Activated T-helper 1 cell treated with anti-CD3 and anti-CD28 coated beads, Interleukin-12 subunit alpha, Interleukin-12 subunit beta, Interleukin-2, Interleukin-4 antibody, amounts not matched to agents 30 ng/mL and 10 ng/mL and 1 ng/mL, durations not matched to agents 14 hours and 24 hours and 36 hours (primary cell): ENCODE measurements at regions of chr20 and their contacts with region 1.

Region 1: DNA sequence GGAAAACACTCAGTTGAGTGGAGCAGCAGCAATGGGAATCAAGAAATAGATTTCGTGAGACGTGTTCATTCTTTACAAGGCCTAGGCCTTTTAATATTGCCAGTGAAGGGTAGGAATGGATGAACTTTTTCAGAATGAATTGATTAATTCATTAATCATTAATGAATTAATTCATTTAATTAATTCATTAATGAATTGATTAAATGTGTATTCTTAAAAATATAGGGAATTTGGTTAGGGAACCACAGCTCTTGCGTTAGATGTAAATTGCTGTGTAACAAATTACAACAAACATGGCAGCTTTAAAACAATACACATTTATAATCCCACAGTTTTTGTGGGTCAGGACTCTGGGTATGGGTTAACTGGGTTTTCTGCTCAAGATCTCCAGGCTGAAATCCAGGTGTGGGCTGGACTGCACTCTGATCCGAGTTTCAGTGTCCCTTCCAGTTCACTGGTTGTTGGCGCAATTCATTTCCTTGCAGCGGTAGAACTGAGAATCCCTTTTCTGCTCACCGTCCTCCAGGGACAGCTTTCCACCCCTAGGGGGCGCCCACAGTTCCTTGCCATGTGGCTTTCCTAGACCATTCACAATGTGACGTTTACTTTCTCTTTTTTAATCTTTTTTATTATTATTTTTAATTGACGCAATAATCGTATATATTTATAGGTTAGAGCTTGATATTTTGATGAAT is 32.8 kb upstream of the BCAS1 start:
- DNase-seq: peak; percentile 61
- H3K4me3 Mint-ChIP-seq: no peak overlapping the region
- H3K27ac Mint-ChIP-seq: no peak overlapping the region
- H3K4me1 Mint-ChIP-seq: no peaks in the 10 kb centered on the region
- H3K27me3 Mint-ChIP-seq: peaks cover 17% of the 10 kb centered on the region

Region 2: GRCh38 chr20:54115151-54115854 is 12.1 kb after region 1 on chr20:
- intact Hi-C with region 1: no loop called
- DNase-seq: no peak
- H3K4me3 Mint-ChIP-seq: no peak overlapping the region
- H3K27ac Mint-ChIP-seq: no peak overlapping the region
- H3K4me1 Mint-ChIP-seq: no peaks in the 10 kb centered on the region
- H3K27me3 Mint-ChIP-seq: peaks cover 16% of the 10 kb centered on the region

Region 3: DNA sequence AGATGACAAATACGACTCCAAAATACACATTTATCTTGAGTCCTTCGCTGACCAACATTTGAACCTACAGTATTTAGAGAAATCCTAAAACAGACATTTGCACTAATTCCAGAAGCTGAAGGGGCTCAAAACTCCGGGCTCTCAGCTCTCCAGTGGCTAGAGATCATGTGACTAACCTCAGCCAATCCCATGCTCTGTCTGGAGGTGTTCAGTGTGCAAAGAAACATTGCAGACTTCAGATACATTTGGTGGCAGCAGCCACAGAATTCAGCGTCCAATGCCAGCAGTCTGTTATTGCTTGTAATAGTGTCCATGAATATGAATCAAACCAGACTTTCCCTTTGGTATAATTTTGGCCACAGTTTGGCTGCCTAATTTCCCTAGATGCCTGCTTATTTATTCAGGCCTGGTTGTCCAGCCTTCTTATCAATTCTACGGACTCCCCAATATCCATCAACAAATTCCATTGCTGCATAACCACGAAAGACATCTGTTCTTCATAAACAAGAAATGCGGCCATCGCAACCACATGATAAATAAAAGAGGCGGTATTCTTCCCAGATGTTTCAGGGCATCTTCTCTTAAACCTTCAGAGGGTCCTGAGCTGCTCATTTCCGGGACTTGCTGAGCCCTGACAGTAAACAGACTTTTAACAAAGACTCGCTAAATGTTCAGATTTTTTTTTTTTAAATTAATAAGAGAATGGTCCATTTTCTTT is 85.1 kb after region 1 on chr20:
- intact Hi-C with region 1: no loop called
- DNase-seq: no peak
- H3K4me3 Mint-ChIP-seq: no peak overlapping the region
- H3K27ac Mint-ChIP-seq: no peak overlapping the region
- H3K4me1 Mint-ChIP-seq: no peaks in the 10 kb centered on the region
- H3K27me3 Mint-ChIP-seq: peaks cover 13% of the 10 kb centered on the region

Region 4: DNA sequence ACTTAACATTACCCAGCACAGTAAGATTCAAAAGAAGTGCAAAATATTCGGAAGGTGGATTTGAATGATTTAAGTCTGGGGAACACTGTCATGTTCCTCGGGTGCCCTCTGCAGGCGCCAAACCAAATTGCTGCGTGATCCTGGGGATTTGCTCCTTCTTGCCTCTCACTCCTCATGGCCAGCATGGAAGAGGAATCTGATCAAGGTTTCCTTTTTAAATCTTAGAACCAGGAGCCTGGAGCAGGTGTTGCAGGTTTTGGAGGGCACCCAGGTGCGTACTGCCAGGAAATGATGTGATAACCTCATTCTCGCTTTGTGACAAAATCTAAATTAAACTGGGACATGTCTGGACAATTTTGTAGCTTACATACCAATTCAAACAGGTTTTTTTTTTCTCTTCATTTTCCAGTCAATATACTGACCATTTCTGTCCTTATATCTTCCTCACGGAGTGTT is 96.5 kb after region 1 on chr20:
- intact Hi-C with region 1: loop called (anchors 1 kb)
- DNase-seq: peak; percentile 44
- H3K4me3 Mint-ChIP-seq: no peak overlapping the region
- H3K27ac Mint-ChIP-seq: no peak overlapping the region
- H3K4me1 Mint-ChIP-seq: no peaks in the 10 kb centered on the region
- H3K27me3 Mint-ChIP-seq: peaks cover 5% of the 10 kb centered on the region

Region 5: GRCh38 chr20:54312557-54312956 is 209.3 kb after region 1 on chr20:
- intact Hi-C with region 1: loop called (anchors 10 kb)
- DNase-seq: no peak
- H3K4me3 Mint-ChIP-seq: no peak overlapping the region
- H3K27ac Mint-ChIP-seq: no peak overlapping the region
- H3K4me1 Mint-ChIP-seq: no peaks in the 10 kb centered on the region
- H3K27me3 Mint-ChIP-seq: no peaks in the 10 kb centered on the region